ENCODE measurements at regions of chr15 and their contacts with region 1.

Region 1: DNA sequence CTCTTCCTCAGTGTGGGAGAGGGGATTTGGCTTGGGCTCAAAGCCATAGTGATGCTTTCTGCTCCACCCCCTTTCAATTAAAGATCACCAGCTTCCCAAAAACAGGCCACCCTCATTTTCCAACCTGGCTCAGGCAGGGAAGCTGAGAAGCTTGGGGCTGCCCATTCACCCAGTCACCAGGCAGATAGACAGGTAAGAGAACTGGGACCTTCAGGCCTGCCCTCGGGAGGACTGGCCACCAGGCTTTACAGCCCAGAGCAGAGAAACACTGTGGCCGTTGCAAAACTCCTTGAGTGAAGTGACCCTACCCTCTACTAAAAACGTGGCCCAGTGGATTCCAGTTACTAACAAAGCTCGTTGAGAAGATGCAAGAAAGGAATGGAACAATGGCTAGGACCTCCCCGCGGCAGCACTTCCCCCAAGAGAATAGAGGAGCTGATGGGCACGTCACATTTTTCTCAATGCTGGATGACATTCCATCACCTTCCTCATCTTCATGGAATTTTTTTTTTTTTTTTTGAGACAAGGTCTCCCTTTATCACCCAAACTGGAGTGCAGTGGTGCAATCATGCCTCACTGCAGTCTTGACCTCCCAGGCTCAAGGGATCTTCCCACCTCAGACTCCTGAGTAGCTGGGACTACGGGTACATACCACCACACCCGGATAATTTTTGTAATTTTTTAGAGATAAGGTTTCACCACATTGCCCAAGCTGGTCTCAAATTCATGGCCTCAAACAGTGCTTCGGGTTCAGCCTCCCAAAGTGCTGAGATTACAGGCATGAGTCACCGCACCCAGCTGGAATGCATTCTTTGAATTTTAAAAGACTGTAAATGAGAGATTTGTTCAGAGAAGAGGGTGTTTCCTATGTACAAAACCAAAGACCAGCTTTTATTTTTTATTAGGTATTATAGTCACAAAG is 37.9 kb downstream of the LIPC start:
- DNase-seq: peak; percentile 69 to 97
- ATAC-seq: peak; percentile 86 to 93
- H3K4me3 ChIP-seq: no peak overlapping the region
- H3K27ac ChIP-seq: peak overlapping the region; percentile 96 to 99
- H3K4me1 ChIP-seq: peaks cover 58% of the 10 kb centered on the region
- CTCF ChIP-seq: no peak
- EP300 ChIP-seq: peak; percentile 95 to 99
- POLR2A ChIP-seq: no peak
- RAD21 ChIP-seq: peak; percentile 51 to 84

Region 2: DNA sequence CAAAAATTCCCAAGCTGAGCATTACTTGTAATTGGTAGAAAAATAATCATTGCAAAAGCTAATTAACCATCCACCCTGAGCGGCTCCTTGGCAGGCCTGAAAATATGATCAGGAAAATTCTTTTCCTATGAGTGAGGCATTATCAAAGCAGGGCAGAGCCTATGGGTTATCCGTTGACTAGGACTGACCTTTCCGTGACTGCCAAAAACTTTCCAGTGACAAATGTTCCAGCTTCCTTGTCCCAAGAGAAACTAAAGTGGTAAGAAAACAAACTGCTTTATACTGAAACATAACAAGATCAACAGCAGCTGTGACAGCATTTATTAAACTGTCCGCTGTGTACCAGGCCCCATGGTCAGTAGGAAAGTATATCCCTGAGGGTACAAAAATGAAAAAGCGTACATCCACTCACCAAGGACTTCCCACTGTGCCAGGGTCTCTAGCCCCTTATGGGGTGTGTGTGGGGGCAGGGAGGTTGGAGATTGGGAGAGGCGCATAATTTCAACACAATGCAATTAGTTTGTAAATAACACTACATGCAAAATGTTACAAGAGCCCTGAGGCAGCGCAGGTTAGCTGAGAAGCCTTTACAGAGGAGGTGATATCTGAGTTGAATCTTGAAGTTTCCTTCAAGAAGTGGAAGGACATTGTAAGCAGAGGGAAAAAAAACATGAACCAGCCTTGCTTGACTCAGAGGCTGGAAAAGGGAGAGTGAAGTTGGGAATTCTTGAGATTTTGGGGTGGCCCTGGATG is 29.4 kb before region 1 on chr15:
- CTCF ChIA-PET with region 1: interaction called, 4 read pairs
- POLR2A ChIA-PET with region 1: interaction called, 10 read pairs
- DNase-seq: peak; percentile 89 to 92
- ATAC-seq: peak; percentile 72 to 82
- H3K4me3 ChIP-seq: peak overlapping the region; percentile 8; the same call in 1 of the 3 replicates
- H3K27ac ChIP-seq: peak overlapping the region; percentile 92 to 93
- H3K4me1 ChIP-seq: peaks cover 70% of the 10 kb centered on the region
- CTCF ChIP-seq: no peak
- EP300 ChIP-seq: peak; percentile 68 to 88; a peak in 4 of 5 replicates
- POLR2A ChIP-seq: no peak
- RAD21 ChIP-seq: peak; percentile 39 to 49; a peak in 4 of 5 replicates

Region 3: GRCh38 chr15:58546635-58547627 is 77.2 kb after region 1 on chr15:
- CTCF ChIA-PET with region 1: interaction called, 4 read pairs
- POLR2A ChIA-PET with region 1: interaction called, 38 read pairs
- DNase-seq: peak; percentile 93 to 95
- ATAC-seq: peak; percentile 93 to 96
- H3K4me3 ChIP-seq: peak overlapping the region; percentile 18; the same call in 1 of the 3 replicates
- H3K27ac ChIP-seq: peak overlapping the region; percentile 95
- H3K4me1 ChIP-seq: peaks cover 51% of the 10 kb centered on the region
- CTCF ChIP-seq: no peak
- EP300 ChIP-seq: peak; percentile 71 to 84; a peak in 3 of 5 replicates
- POLR2A ChIP-seq: no peak
- RAD21 ChIP-seq: peak; percentile 49 to 50; a peak in 4 of 5 replicates

Region 4: GRCh38 chr15:58749532-58750337 is 280.0 kb after region 1 on chr15 and contains the start of gene ADAM10:
- CTCF ChIA-PET with region 1: interaction called, 5 read pairs
- POLR2A ChIA-PET with region 1: interaction called, 18 read pairs
- DNase-seq: peak; percentile 99
- ATAC-seq: peak; percentile 89 to 97
- H3K4me3 ChIP-seq: peak within 1 kb of the TSS; percentile 91
- H3K27ac ChIP-seq: peak within 1 kb of the TSS; percentile 93 to 97
- H3K4me1 ChIP-seq: peaks cover 26% of the 10 kb centered on the region
- CTCF ChIP-seq: no peak
- EP300 ChIP-seq: no peak; a peak in 1 of 5 replicates
- POLR2A ChIP-seq: peak; percentile 90
- RAD21 ChIP-seq: 0 out of 5 replicates have a peak, but pooled peaks have one; percentile 14 to 18
- polyA plus RNA-seq, gene ADAM10: 210 and 236 TPM in 2 replicates

Region 5: GRCh38 chr15:58795825-58796224 is 326.1 kb after region 1 on chr15:
- CTCF ChIA-PET with region 1: no interaction called
- POLR2A ChIA-PET with region 1: no interaction called
- DNase-seq: no peak
- ATAC-seq: no peak
- H3K4me3 ChIP-seq: no peak overlapping the region
- H3K27ac ChIP-seq: no peak overlapping the region
- H3K4me1 ChIP-seq: no peaks in the 10 kb centered on the region
- CTCF ChIP-seq: no peak
- EP300 ChIP-seq: no peak
- POLR2A ChIP-seq: no peak
- RAD21 ChIP-seq: no peak